Ovary (tissue), 10 donors: ENCODE measurements at regions of chr1 and their contacts with region 1.

Region 1: GRCh38 chr1:205919026-205919746 is 24.1 kb downstream of the SLC26A9 start:
- DNase-seq: peak; percentile 59 to 75 (median 72)
- H3K4me3 ChIP-seq: no peak overlapping the region
- H3K27ac ChIP-seq: no peak overlapping the region
- H3K4me1 ChIP-seq: peaks cover 13% of the 10 kb centered on the region
- H3K27me3 ChIP-seq: no peaks in the 10 kb centered on the region
- CTCF ChIP-seq: peak; percentile 57 to 69 (median 58)
- EP300 ChIP-seq: no peak
- POLR2A ChIP-seq: no peak

Region 2: GRCh38 chr1:205965036-205965884 is 46.1 kb after region 1 on chr1:
- intact Hi-C with region 1: loop called in 2 of 4 experiments (anchors 5 to 10 kb)
- DNase-seq: no peak
- H3K4me3 ChIP-seq: no peak overlapping the region
- H3K27ac ChIP-seq: no peak overlapping the region
- H3K4me1 ChIP-seq: peaks cover 5% of the 10 kb centered on the region
- H3K27me3 ChIP-seq: no peaks in the 10 kb centered on the region
- CTCF ChIP-seq: no peak
- EP300 ChIP-seq: no peak
- POLR2A ChIP-seq: no peak

Region 3: DNA sequence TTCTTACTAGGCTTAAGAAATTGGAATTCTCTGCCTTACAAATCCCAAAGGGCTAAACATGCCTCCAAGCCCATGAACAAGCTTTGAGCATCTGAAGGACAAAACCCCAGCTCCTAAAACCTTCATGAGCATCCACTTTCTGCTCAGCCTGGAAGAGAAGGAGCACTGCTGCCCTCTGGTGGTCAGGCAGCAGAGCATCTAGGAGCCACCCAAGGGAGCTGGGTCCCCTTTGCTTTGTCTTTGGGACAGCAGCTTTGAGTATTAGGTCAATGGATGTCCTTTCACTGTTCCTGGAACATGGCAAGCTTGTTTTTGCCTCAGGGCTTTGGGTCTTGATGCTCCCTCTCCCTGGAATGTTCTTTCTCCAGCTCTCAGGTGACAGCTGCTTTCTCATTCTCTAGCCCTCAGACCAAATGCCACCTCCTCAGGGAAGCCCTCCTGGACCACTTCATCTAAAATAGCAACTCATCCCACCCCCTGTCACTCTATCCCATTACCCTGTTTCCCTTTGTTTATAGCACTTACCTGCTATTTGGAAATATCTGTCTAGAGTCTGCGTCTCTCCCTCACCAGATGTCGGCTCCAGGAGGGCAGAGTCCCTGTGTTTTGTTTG is 58.3 kb after region 1 on chr1:
- intact Hi-C with region 1: loop called in 2 of 4 experiments (anchors 2 to 10 kb)
- DNase-seq: peak; percentile 67 to 86 (median 78)
- H3K4me3 ChIP-seq: no peak overlapping the region
- H3K27ac ChIP-seq: no peak overlapping the region
- H3K4me1 ChIP-seq: peaks cover 4% of the 10 kb centered on the region
- H3K27me3 ChIP-seq: no peaks in the 10 kb centered on the region
- CTCF ChIP-seq: peak; percentile 80 to 91 (median 87)
- EP300 ChIP-seq: no peak
- POLR2A ChIP-seq: no peak